ENCODE measurements at regions of chr3 and their contacts with region 1.

Region 1: GRCh38 chr3:56988458-56989168 is 71.9 kb upstream of the SPATA12 start:
- DNase-seq: peak; percentile 66
- ATAC-seq: peak; percentile 85

Region 2: DNA sequence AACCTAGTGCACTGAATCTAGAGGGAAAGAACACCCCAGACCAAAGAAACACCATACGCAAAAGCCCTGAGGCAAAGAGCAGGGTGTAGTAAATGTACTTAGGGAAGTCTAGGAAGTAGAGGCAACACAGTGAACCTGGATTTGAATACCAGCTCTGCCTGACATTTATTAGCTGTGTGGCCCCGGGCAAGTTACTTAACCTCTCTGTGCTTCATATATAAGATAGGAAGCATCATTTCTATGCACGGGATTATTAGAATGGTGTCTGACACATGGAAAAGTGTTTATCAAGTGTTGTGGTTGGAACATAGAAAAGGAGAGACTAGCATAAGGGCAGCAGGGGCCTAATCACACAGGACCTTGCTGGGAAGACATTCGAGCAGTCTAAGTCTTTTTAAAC is 652.6 kb before region 1 on chr3:
- intact Hi-C with region 1: no loop called
- DNase-seq: no peak
- ATAC-seq: no peak

Region 3: GRCh38 chr3:56389183-56389830 is 599.3 kb before region 1 on chr3:
- intact Hi-C with region 1: no loop called
- DNase-seq: no peak
- ATAC-seq: no peak

Region 4: DNA sequence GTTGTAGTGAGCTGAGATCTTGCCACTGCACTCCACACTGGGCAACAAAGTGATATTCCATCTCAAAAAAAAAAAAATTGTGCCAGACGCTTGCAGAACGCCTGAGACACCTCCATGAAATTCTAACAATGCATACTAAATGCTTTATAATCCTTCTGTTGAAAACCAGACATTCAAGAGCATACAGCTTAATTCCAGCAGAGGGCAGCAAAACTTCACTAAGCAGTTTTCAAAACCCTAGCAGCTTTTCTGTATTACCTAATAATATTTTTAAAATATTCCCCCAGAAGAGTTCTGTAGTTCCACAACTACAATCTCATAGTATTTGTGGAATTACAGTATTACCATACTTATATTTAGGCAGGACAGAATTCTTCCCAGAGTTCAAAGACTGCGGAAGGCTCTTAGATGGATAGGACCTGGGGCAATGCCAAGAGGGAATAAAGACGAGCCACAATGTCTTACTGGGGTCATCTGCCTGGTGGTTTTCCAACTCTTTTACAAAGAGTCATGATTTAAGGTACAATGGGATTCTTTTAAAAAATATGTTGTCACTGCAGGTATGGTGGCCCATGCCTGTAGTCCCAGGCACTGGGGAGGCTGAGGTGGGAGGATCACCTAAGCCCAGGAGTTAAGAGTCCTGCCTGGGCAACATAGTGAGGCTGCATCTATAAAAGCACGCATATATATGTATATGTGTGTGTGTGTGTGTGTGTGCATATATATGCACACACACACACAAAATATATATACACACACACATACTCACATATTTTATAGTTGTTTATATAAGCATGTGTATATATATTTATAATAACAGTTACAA is 285.9 kb before region 1 on chr3:
- intact Hi-C with region 1: loop called (anchors 1 kb)
- DNase-seq: no peak
- ATAC-seq: peak; percentile 70

Measured in left ventricle myocardium superior (tissue), 1 donor.